ENCODE measurements at regions of chr16 and their contacts with region 1.

Region 1: GRCh38 chr16:30526823-30527635 is 663 bp upstream of the ZNF768 start:
- DNase-seq: peak; percentile 91 to 99 (median 96)
- H3K4me3 ChIP-seq: peak overlapping the region; percentile 56 to 100 (median 85)
- H3K27ac ChIP-seq: peak overlapping the region; percentile 88 to 100 (median 98)
- H3K27me3 ChIP-seq: no peaks in the 10 kb centered on the region
- CTCF ChIP-seq: peak in 41 of 56 donors; percentile 2 to 52 (median 26)

Region 2: DNA sequence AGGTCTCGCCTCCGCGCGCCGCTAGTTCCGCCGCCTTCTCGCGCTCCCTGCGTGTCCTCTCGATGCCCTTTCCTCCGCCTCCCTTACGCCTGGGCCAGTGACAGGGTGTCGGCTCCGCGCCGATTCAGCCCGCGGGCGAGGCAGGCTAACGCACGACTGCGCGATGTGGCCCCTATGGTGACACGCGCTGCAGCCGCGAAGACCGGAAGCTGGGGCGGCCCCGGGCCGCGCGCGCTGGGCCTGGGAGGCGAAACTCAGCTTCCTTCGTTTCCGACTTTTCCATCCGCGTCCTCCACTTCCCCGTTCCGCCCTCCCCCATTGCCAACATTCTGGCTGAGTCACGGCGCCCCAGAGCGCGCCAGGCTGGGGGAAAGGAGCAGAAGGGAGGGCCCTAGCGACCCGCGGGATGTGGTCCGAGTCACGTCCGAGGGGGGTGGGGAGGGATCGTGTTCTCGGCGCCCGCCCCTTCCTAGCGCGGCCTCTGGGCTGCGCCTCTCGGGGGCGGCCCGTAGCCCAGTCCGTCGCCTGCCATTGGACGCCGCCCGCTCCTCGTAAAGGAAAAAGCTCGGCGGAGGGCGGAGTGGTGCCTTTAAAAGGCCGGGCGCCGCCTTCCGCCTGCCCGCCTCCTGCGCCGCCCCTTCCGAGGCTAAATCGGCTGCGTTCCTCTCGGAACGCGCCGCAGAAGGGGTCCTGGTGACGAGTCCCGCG is 461.7 kb before region 1 on chr16 and contains the start of gene ALDOA:
- intact Hi-C with region 1: loop called in 1 of 2 experiments (anchors 10 kb)
- DNase-seq: peak; percentile 94 to 99 (median 98)
- H3K4me3 ChIP-seq: peak within 1 kb of the TSS; percentile 67 to 100 (median 96)
- H3K27ac ChIP-seq: peak within 1 kb of the TSS; percentile 91 to 100 (median 100)
- H3K27me3 ChIP-seq: no peaks in the 10 kb centered on the region
- CTCF ChIP-seq: peak in 42 of 56 donors; percentile 5 to 56 (median 32)
- total RNA-seq, gene ALDOA: 996 to 2,428 (median 1,936) TPM

Region 3: GRCh38 chr16:30378236-30379204 is 148.5 kb before region 1 on chr16:
- intact Hi-C with region 1: loop called in 1 of 2 experiments (anchors 2 kb)
- DNase-seq: peak; percentile 99 to 100 (median 100)
- H3K4me3 ChIP-seq: peak overlapping the region; percentile 56 to 99 (median 91)
- H3K27ac ChIP-seq: peak overlapping the region; percentile 94 to 100 (median 100)
- H3K27me3 ChIP-seq: no peaks in the 10 kb centered on the region
- CTCF ChIP-seq: peak in 27 of 56 donors; percentile 5 to 50 (median 25)

Region 4: DNA sequence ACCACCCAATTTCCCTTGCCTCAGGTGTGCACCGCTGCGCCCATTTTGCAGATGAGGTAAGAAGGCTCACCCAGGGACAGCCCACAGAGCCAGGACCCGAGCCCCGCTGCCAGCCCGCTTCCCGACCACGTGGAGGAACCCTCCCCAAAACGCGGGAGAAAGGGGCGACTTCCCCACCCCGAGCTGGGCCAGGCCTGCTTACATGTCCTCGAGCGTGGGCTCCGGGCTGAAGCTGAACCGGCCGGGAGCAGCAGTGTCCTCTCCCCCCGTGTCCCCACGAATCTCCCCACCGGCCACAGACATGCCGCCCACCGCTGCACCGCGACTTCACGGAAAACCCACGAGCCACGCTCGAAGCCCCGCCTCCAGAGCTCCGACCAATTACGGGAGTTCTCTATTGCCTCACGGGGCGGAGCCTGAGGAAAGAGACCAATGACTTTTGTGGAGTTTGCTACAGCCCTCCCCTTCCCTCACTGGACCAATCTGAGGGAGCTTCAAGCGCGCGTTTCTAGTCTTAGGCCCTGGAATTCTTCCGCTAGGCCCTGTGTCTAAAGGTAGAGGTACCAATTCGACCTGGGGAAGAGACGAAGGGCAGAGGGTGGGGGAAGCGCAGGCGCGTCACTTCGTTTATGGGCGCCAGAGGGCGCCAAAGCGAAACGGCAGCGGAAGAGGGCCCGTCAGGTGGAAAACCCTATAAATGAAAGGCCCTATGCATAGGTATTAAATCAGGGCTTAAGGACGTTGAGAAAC is 97.2 kb before region 1 on chr16 and contains the start of gene DCTPP1:
- intact Hi-C with region 1: loop called in 1 of 2 experiments (anchors 5 kb)
- DNase-seq: peak; percentile 83 to 96 (median 94)
- H3K4me3 ChIP-seq: peak within 1 kb of the TSS; percentile 56 to 91 (median 78)
- H3K27ac ChIP-seq: peak within 1 kb of the TSS in 56 of 59 donors; percentile 5 to 90 (median 75)
- H3K27me3 ChIP-seq: no peaks in the 10 kb centered on the region
- CTCF ChIP-seq: peak; percentile 41 to 87 (median 70)
- total RNA-seq, gene DCTPP1: 10.5 to 35.8 (median 21.2) TPM

Region 5: GRCh38 chr16:30445408-30446202 is 81.4 kb before region 1 on chr16 and contains the start of gene SEPHS2:
- intact Hi-C with region 1: loop called (anchors 2 to 5 kb)
- DNase-seq: peak; percentile 93 to 99 (median 96)
- H3K4me3 ChIP-seq: peak within 1 kb of the TSS; percentile 70 to 100 (median 94)
- H3K27ac ChIP-seq: peak within 1 kb of the TSS; percentile 21 to 98 (median 93)
- H3K27me3 ChIP-seq: no peaks in the 10 kb centered on the region
- CTCF ChIP-seq: peak in 47 of 56 donors; percentile 2 to 62 (median 36)
- total RNA-seq, gene SEPHS2: 16.0 to 51.0 (median 28.6) TPM